ENCODE measurements at regions of chr9 and their contacts with region 1.

Region 1: DNA sequence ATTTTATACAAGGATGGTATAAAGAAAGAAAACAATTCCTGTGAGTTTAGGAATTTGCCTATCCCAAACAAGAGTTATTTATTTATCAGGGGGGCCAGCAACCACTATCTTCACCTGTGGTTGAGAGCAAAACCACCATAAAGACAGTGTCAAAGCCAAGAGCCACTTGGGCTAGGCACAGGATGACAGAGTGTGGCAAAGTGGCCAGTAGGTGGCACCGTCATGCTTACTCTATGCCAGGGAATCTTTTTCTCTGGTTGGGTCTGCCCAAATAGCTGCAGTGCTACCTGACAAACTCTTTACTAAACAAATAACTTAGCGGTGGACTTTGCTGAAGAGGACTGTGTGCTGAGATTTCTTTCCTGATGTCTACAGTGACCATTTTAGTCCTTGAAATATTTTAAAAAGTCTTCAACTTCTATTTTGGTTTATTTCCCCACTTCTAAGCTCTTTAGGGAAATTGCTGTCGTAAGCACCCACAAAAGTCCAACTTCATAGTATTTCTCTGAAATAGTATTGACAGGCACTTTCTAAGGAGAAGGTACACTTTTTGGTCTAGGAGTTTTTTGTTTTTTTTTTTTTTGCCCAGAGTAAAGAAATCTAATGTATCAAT is 285.0 kb downstream of the RFX3 start:
- DNase-seq: peak; percentile 63
- ATAC-seq: peak; percentile 90
- H3K4me3 ChIP-seq: no peak overlapping the region
- H3K27ac ChIP-seq: no peak overlapping the region
- H3K4me1 ChIP-seq: peaks cover 3% of the 10 kb centered on the region; the same call in 1 of the 2 replicates
- H3K27me3 ChIP-seq: no peaks in the 10 kb centered on the region
- CTCF ChIP-seq: peak; percentile 78
- POLR2A ChIP-seq: no peak
- RAD21 ChIP-seq: peak; percentile 83

Region 2: DNA sequence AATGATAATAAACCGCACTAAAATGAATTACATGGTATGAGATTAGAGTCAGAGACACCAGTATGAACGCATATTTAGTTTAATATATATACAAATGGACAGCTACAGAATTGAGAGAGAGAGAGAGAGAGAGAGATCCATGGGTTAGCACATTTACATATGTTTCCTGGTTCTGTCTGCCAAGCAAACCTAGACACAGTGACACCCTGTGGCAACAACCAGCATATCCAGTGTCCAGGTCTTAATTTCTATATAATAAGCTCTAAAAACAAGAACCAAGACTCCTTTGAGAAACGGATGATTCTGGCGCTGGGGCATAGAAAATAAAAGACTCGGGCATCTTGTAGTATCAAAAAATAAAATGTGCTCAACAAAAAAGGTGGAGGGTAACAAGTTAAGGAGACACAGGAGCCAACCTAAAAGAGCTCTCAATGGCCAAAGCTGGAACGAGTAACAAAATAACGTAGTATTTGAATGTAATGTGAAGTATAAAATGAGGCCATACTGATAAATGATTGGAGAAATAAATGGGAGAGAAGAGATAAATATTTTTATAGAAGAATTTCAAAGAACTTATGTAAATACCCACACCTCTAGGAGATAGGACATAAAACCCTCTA is 200.5 kb after region 1 on chr9:
- CTCF ChIA-PET with region 1: interaction called, 14 read pairs
- POLR2A ChIA-PET with region 1: no interaction called
- dilution Hi-C with region 1: no loop called
- in situ Hi-C with region 1: loop called (anchors 5 kb)
- intact Hi-C with region 1: loop called (anchors 1 kb)
- DNase-seq: peak; percentile 77
- ATAC-seq: peak; percentile 91
- H3K4me3 ChIP-seq: no peak overlapping the region
- H3K27ac ChIP-seq: no peak overlapping the region
- H3K4me1 ChIP-seq: no peaks in the 10 kb centered on the region
- H3K27me3 ChIP-seq: no peaks in the 10 kb centered on the region
- CTCF ChIP-seq: peak; percentile 72
- POLR2A ChIP-seq: no peak
- RAD21 ChIP-seq: peak; percentile 73

Region 3: GRCh38 chr9:3447788-3448187 is 207.0 kb after region 1 on chr9:
- CTCF ChIA-PET with region 1: interaction called, 5 read pairs
- POLR2A ChIA-PET with region 1: no interaction called
- dilution Hi-C with region 1: no loop called
- in situ Hi-C with region 1: loop called (anchors 5 kb)
- intact Hi-C with region 1: no loop called
- DNase-seq: no peak
- ATAC-seq: no peak
- H3K4me3 ChIP-seq: no peak overlapping the region
- H3K27ac ChIP-seq: no peak overlapping the region
- H3K4me1 ChIP-seq: no peaks in the 10 kb centered on the region
- H3K27me3 ChIP-seq: no peaks in the 10 kb centered on the region
- CTCF ChIP-seq: no peak
- POLR2A ChIP-seq: no peak
- RAD21 ChIP-seq: no peak

Region 4: DNA sequence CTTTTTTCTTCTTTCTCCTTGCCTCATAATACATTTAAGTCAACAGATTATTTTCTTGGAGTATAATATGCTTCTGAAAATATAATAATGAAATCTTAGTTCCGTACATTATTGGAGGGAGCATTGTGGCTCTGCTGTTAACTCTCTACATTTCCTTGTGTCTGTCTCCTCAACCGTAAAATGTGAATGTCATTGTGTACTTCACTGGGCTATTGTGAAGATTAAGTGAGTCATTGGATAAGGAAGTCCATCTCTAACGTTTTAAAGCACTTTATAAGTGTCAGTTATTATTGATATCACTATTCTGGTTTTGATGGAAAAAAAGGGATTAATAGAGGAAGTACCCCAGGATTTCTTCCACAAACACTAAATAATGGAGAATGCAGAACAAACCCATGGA is 589.5 kb after region 1 on chr9:
- CTCF ChIA-PET with region 1: no interaction called
- POLR2A ChIA-PET with region 1: no interaction called
- dilution Hi-C with region 1: no loop called
- in situ Hi-C with region 1: no loop called
- intact Hi-C with region 1: loop called (anchors 10 kb)
- DNase-seq: no peak
- ATAC-seq: no peak
- H3K4me3 ChIP-seq: no peak overlapping the region
- H3K27ac ChIP-seq: no peak overlapping the region
- H3K4me1 ChIP-seq: peaks cover 5% of the 10 kb centered on the region
- H3K27me3 ChIP-seq: no peaks in the 10 kb centered on the region
- CTCF ChIP-seq: no peak
- POLR2A ChIP-seq: no peak
- RAD21 ChIP-seq: no peak

Region 5: DNA sequence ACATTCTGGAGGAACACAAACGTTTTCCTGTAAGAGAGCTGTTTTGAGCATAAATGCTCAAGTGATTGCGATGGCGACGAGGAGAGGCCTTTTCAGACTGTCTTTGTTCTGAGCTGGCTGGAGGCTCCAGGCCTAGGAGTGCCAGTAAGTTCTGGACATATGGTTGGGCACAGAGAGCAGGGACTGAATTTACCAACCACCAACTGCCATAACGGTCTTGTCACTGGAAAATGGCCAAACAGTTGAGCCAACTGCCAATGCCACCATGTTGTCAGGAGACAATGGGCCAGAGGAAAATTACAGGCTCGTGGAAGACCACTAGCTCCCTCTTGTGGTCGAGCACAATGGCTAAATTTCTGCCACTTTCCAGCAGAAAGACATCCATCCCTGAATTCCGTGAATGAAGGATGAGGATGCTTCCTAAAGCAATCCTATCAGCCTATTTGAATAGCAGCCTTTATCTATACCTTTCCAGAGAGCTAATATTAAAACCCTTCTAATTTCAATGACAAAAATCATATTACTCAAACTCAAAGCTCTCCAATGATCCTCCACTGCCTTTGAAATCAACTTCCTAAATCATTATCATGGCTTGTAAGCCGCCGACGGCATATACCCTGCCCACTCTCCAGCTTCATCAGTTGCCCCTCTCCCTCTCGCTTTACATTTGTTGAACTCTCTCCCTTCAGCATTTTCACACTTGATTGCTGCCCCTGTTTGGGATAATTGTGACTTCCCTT is 1126.0 kb after region 1 on chr9:
- CTCF ChIA-PET with region 1: interaction called, 3 read pairs
- POLR2A ChIA-PET with region 1: no interaction called
- dilution Hi-C with region 1: no loop called
- in situ Hi-C with region 1: loop called (anchors 25 kb)
- intact Hi-C with region 1: no loop called
- DNase-seq: peak; percentile 54
- ATAC-seq: no peak
- H3K4me3 ChIP-seq: no peak overlapping the region
- H3K27ac ChIP-seq: no peak overlapping the region
- H3K4me1 ChIP-seq: no peaks in the 10 kb centered on the region
- H3K27me3 ChIP-seq: peaks cover 2% of the 10 kb centered on the region
- CTCF ChIP-seq: peak; percentile 80
- POLR2A ChIP-seq: no peak
- RAD21 ChIP-seq: peak; percentile 93

Region 6: GRCh38 chr9:4375424-4376200 is 1134.8 kb after region 1 on chr9:
- CTCF ChIA-PET with region 1: no interaction called
- POLR2A ChIA-PET with region 1: no interaction called
- dilution Hi-C with region 1: no loop called
- in situ Hi-C with region 1: loop called (anchors 25 kb)
- intact Hi-C with region 1: loop called (anchors 2 kb)
- DNase-seq: peak; percentile 82
- ATAC-seq: peak; percentile 82
- H3K4me3 ChIP-seq: no peak overlapping the region
- H3K27ac ChIP-seq: no peak overlapping the region
- H3K4me1 ChIP-seq: no peaks in the 10 kb centered on the region
- H3K27me3 ChIP-seq: peaks cover 8% of the 10 kb centered on the region
- CTCF ChIP-seq: peak; percentile 84
- POLR2A ChIP-seq: no peak
- RAD21 ChIP-seq: peak; percentile 93